HEK293 (cell line): ENCODE measurements at regions of chr11 and their contacts with region 1.

Region 1: DNA sequence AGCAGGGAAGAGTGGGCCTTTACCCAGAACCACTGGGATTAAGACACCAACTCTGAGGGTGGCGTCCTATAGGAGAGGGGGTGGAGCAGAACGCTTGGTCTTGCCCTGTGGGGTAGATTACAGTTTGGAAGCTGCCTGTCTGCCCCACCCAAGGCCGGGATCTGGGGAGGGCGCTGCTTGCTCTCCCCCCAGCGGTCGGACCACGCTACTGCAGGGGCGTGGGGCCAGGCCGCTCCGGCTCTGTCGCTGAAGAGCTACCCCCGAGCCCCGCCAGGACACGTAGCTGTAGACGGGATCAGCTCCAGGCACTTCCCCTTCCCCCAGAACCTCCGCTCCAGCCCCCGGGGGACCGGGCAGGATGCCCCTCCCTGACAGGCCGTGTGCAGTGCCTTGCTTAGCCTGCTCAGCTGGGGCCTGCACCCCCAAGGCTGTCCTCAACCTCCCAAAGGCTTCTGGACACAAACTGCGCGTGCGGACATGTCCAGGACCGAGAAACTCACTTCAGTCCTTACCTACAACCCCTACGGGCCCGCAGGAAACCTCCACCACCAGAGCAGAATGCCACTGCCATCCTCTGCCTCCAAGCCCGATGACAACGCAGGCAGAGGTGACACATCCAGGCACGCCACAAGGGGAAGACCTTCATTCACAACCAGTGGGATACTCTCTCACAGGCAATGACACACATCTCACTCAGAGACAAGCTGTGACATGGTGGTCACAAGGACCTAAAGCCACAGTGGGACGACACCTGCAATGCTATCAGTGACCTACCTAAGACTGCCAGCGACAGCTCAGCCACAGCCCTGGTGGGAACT is 3.6 kb downstream of the AHNAK start:
- H3K4me3 ChIP-seq: peak overlapping the region; percentile 20
- H3K27ac ChIP-seq: no peak overlapping the region
- H3K4me1 ChIP-seq: peaks cover 7% of the 10 kb centered on the region
- CTCF ChIP-seq: peak; percentile 95

Region 2: DNA sequence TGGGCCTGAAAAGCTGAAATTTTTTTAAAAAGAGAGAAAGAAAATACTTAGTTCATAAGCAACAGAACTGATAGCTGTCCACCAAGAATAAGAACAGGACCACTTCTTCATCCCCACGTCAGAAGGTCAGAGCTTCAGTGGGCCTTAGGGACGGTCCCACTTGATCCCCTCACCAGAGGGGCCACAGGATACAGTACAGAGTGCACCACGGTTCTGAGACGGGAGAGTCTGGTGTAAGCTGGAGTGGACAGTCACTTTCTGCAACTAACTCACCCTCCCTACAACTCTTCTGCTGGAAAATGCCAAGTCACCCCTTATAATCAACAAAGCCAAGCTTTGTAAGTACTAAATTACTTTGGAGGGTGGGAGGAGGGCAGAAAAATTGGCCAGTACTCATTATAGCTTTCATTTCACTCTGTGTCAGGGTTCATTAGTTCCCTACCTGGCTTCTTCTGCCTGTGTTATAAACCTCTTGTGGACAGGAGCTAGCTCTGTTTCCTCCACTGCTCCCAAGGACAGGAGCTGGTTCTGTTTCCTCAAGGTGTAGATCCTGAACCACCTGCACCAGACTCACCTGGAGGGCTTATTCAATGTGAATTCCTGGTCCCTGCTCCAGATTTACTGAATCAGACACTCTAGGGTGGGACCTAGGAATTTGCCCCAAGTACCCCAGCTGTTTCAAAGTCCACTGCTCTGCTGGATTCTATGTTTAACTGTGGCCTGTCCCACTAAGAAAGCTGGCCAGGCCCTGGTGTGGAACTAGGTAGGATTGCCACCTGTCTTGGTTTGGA is 84.6 kb before region 1 on chr11:
- CTCF ChIA-PET with region 1: interaction called, 11 read pairs
- POLR2A ChIA-PET with region 1: no interaction called
- H3K4me3 ChIP-seq: no peak overlapping the region
- H3K27ac ChIP-seq: no peak overlapping the region
- H3K4me1 ChIP-seq: no peaks in the 10 kb centered on the region
- CTCF ChIP-seq: no peak

Region 3: GRCh38 chr11:62508268-62509058 is 34.5 kb before region 1 on chr11:
- CTCF ChIA-PET with region 1: interaction called, 18 read pairs
- POLR2A ChIA-PET with region 1: interaction called, 4 read pairs
- H3K4me3 ChIP-seq: no peak overlapping the region
- H3K27ac ChIP-seq: no peak overlapping the region
- H3K4me1 ChIP-seq: no peaks in the 10 kb centered on the region
- CTCF ChIP-seq: no peak; the same call in 1 of the 2 replicates

Region 4: GRCh38 chr11:62556108-62556871 is 13.3 kb after region 1 on chr11:
- CTCF ChIA-PET with region 1: interaction called, 68 read pairs
- POLR2A ChIA-PET with region 1: interaction called, 53 read pairs
- H3K4me3 ChIP-seq: no peak overlapping the region
- H3K27ac ChIP-seq: peak overlapping the region; percentile 53; the same call in 1 of the 2 replicates
- H3K4me1 ChIP-seq: peaks cover 6% of the 10 kb centered on the region; the same call in 1 of the 2 replicates
- CTCF ChIP-seq: no peak